Activated naive CD4-positive, alpha-beta T cell treated with anti-CD3 and anti-CD28 coated beads, Interleukin-2, amount 10 ng/mL, durations not matched to agents 7 days and 5 days (primary cell): ENCODE measurements at regions of chr4 and their contacts with region 1.

Region 1: DNA sequence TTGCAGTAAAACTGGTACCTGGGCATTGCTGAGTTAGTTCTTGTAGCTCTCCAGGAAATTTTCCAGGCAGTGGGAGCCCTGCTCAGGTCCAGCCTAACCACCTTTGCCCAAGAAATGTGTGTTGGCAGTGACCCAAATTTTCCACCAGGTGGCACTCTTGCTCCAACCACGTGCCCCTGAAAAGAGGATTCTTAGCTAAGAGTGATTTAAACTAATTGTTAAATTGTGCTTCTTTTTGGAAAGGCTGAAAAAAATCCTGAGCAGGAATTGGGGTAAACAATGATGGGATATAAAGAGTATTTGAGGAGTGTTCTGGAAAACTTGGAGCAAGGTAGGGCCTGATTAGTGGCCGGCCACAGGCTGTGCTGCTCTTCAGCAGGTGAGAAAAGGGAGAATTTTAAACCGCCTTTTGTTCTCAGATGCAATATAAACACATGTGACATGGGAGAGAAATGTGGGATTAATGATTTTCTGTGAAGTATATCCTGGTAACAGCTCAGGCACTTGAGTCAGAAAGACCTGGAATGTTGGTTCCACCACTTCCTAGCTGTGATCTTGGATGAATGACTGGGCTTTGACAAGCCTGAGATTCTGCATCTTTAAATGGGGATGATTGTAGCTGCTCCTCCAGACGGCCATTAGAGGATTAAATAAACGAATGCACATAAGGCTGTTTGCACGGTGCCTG is 219.6 kb downstream of the PTTG2 start:
- DNase-seq: peak; percentile 79
- H3K4me3 Mint-ChIP-seq: no peak overlapping the region
- H3K27ac Mint-ChIP-seq: peak overlapping the region; percentile 3
- H3K4me1 Mint-ChIP-seq: peaks cover 54% of the 10 kb centered on the region
- H3K27me3 Mint-ChIP-seq: peaks cover 5% of the 10 kb centered on the region

Region 2: GRCh38 chr4:38069271-38069760 is 110.5 kb before region 1 on chr4:
- CTCF ChIA-PET with region 1: interaction called, 42 read pairs
- DNase-seq: peak; percentile 69
- H3K4me3 Mint-ChIP-seq: no peak overlapping the region
- H3K27ac Mint-ChIP-seq: no peak overlapping the region
- H3K4me1 Mint-ChIP-seq: peaks cover 47% of the 10 kb centered on the region
- H3K27me3 Mint-ChIP-seq: no peaks in the 10 kb centered on the region

Region 3: DNA sequence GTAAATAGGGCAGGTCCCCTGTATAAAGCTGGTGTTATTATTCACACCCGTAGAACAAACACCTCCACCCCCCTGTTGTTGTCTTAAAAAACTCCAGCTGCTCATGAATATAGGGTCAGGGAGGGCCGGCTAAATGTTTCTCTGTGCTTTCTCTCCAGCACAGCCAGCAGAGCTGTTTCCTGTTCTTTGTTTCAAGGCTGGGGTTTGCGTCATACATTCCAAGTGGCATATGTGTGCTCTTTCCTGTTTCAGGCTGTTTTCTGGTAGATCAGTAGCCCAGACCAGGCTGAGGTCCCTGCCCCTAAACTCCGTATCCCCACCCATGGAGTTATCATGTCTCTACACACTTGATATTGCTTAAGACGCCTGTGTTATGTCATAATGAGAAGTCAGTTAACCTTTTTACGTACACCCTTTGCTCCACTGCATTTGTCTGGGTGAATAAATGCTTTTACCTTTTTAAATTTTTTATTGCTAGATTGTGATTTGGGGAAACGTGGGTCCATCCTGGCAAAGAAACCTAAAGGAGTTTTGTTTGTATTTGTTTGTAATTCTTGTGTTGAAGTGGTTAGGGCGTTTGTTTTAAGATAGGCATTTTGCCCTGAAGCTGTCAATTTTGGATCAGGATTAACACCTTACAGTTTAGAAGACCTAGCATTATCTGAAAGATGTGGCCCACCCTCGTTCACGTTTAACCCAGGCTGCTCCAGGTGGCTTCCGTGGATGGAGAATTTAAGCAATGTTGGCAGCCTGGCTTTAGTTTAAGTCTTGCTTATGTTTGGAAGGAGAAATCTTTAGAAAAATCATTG is 487.5 kb after region 1 on chr4:
- CTCF ChIA-PET with region 1: interaction called, 13 read pairs
- DNase-seq: peak; percentile 76
- H3K4me3 Mint-ChIP-seq: peak overlapping the region; percentile 93
- H3K27ac Mint-ChIP-seq: peak overlapping the region; percentile 91
- H3K4me1 Mint-ChIP-seq: peaks cover 70% of the 10 kb centered on the region
- H3K27me3 Mint-ChIP-seq: no peaks in the 10 kb centered on the region

Region 4: GRCh38 chr4:38730830-38731646 is 551.2 kb after region 1 on chr4:
- CTCF ChIA-PET with region 1: interaction called, 84 read pairs
- DNase-seq: peak; percentile 87
- H3K4me3 Mint-ChIP-seq: no peak overlapping the region
- H3K27ac Mint-ChIP-seq: no peak overlapping the region
- H3K4me1 Mint-ChIP-seq: peaks cover 33% of the 10 kb centered on the region
- H3K27me3 Mint-ChIP-seq: peaks cover 7% of the 10 kb centered on the region